Lower leg skin (tissue), 4 donors: ENCODE measurements at regions of chr2 and their contacts with region 1.

Region 1: DNA sequence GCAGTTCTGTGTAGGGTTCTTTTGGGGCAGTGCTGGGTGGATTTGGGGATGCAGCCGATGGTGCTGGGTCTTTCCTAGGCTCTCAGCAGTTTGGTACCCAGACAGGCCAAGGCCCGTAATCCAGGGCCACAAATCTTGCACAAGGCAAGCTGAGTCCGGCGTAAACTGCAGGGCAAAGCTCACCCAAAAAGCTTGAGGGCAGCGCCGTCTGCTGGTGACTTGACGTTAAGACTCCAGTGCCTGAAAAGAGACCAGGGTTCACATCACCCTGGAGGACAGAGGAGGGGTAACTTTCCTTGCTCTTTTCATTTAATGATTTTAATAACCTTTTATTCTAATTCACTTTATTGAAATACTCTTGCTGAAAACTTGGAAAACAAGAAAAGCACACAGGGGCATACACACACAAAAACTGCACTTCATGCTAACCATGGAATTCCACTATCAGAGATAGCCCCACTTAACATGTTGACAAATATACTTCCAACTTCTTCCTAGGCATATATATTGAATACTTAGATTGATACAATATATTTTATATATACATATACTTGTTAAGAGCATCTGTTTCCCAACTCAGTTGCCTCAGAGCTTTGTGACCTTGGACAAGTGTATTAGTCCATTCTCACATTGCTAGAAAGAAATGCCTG is 38.9 kb downstream of the CNGA3 start:
- DNase-seq: peak; percentile 43 to 93
- H3K4me3 ChIP-seq: no peak overlapping the region
- CTCF ChIP-seq: peak in 2 of 3 donors; percentile 15 to 78
- POLR2A ChIP-seq: no peak

Region 2: DNA sequence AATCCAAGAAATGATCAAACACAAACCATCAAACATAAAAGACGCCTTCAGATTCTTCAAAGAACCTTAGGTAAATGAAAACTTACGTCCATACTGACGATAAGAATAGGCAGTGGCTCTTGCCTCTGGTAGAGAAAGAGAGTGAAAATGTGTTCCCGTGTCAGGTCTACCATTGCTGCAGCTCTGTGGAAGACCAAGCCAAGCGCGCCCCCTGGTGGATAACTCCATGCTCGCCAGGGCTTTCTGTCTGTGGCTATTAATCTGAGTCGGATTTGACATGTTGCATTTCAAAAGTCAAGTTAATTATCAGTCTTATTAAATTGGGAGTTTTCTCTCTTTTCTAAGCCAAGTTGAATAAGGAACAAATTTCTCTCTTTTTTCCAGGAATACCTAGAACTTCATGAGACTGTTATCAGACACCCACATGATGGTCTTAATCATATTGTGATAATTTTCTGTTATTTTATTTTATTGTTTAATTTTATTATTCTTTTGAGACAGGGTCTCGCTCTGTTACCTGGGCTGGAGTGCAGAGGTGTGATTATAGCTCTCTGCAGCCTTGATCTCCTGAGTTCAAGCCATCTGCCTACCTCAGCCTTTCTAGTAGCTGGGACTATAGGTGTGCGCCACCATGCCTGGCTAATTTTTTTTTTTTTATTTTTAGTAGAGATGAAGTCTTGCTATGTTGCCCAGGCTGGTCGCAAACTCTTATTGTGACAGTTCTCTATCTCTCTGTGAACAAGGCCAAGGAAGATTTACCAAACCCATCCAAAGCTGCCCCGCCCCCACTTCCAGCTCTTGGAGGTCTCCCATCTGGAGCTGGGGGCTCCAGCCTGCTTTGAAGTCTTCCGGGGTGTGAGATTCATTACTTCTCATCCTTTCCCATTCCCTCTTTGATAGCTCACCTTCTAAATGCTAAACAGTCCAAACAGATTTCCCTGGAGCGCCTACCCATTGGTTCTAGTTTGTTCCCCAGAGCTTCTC is 687.6 kb before region 1 on chr2:
- intact Hi-C with region 1: loop called (anchors 10 kb)
- DNase-seq: peak; percentile 88 to 99
- H3K4me3 ChIP-seq: no peak overlapping the region
- CTCF ChIP-seq: peak in 2 of 3 donors; percentile 18 to 78
- POLR2A ChIP-seq: no peak

Region 3: DNA sequence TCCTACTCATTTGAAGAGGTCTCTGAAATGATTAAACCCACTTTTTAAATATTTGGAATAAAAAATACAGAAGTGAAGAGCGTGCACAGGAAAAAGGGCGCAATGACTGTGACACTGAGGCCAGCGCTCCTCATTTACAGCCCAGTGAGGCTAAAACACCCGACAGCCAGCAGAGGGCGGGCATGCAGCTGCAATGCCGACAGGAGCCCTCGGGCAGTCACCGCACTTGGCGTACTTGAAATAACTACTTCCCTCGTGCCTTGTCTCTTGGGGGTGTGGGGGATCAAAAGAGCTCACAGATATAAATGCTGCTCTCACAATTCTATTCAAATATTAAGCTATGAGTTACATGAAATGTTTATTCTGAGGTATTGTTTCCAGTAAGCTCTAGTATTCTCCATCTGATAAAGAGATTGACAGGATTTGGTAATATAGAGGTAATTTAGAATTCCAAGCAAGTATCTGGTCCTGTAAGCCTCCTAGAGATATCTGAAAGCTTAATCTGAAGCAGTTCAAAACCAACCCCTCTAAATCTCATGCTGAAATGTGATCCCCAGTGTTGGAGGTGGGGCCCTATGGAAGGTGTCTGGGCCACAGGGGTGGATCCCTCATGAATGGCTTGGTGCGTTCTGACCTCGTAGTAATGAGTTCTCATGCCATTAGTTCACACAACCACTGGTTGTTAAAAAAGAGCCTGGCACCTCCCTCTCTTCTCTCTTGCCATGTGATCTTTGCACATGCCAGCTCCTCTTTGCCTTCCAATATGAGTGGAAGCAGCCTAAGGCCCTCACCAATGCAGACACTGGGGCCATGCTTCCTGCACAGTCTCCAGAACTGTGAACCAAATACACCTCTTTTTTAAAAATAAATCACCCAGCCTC is 578.2 kb before region 1 on chr2:
- intact Hi-C with region 1: loop called (anchors 10 kb)
- DNase-seq: peak; percentile 76 to 95
- H3K4me3 ChIP-seq: no peak overlapping the region
- CTCF ChIP-seq: peak in 1 of 3 donors; percentile 62
- POLR2A ChIP-seq: no peak

Region 4: DNA sequence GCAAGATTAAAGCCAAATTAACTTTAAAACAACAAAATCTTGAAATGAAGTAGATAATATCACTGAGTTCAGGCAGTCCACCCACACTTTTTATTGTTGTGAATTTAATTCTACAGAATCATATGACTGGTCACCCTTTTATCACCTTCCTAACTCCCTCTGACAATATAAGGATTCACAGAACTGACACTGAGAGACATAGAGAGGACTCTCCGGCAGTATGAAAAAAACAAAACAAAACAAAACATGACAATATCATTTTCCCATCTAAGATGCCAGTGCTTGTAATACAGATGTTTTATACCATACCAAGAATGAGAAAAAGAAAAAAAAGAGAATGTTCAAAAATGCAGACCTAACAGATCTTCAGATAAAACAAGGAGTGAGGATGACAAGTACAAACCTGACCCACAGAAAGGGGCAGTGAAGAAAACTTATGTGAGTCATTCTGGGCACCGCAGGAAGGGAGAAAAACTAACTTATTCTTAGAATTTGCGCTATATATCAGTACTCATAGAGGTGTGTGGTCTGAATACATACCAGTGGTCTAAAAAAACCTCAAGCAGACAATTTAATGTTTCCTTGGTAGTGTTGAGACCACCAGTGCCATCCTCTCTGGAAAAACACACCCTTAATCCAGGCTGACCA is 535.2 kb before region 1 on chr2:
- intact Hi-C with region 1: no loop called
- DNase-seq: no peak
- H3K4me3 ChIP-seq: no peak overlapping the region
- CTCF ChIP-seq: no peak
- POLR2A ChIP-seq: no peak